ENCODE measurements at regions of chr1 and their contacts with region 1.

Region 1: GRCh38 chr1:161117759-161118581 is at the starts of genes NIT1 and PFDN2:
- DNase-seq: peak; percentile 84
- H3K4me3 Mint-ChIP-seq: peak within 1 kb of the TSS; percentile 93
- H3K27ac Mint-ChIP-seq: peak within 1 kb of the TSS; percentile 96
- H3K4me1 Mint-ChIP-seq: peaks cover 51% of the 10 kb centered on the region
- H3K27me3 Mint-ChIP-seq: no peaks in the 10 kb centered on the region
- total RNA-seq, gene NIT1: 47.5 and 48.5 TPM in 2 replicates
- total RNA-seq, gene PFDN2: 138 and 139 TPM in 2 replicates

Region 2: DNA sequence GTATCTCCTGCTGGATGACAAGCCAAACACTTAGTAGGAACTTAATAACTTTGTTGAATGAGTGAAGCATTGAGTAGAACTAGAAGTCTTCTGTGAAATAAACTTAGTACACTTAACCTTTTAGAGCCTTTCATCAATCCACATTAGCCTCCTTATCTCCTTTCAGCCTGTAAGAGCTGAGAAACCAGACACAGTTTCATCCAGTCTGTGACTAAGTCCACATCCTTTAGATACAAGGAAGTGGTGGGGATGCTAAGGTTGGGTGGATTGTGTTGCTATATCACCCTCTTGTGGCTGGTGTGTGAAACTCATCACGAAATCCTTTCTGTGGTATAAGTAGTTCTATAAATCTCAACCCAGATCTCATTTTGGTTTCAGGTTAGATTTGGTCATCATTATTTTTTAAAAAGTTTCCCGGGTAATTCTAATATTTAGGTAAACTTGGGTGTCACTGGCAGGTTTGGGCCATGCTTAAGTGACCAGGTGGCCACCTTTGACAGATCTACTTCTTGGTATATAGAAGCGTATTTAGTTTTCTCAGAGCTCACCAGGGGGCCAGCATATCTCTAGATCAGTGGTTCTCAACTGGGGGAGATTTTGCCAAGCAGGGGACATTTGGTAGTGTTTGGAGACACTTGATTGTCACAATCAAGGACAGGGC is 510.8 kb before region 1 on chr1:
- intact Hi-C with region 1: no loop called
- DNase-seq: peak; percentile 62
- H3K4me3 Mint-ChIP-seq: peak overlapping the region; percentile 55
- H3K27ac Mint-ChIP-seq: peak overlapping the region; percentile 60
- H3K4me1 Mint-ChIP-seq: peaks cover 51% of the 10 kb centered on the region
- H3K27me3 Mint-ChIP-seq: no peaks in the 10 kb centered on the region

Region 3: DNA sequence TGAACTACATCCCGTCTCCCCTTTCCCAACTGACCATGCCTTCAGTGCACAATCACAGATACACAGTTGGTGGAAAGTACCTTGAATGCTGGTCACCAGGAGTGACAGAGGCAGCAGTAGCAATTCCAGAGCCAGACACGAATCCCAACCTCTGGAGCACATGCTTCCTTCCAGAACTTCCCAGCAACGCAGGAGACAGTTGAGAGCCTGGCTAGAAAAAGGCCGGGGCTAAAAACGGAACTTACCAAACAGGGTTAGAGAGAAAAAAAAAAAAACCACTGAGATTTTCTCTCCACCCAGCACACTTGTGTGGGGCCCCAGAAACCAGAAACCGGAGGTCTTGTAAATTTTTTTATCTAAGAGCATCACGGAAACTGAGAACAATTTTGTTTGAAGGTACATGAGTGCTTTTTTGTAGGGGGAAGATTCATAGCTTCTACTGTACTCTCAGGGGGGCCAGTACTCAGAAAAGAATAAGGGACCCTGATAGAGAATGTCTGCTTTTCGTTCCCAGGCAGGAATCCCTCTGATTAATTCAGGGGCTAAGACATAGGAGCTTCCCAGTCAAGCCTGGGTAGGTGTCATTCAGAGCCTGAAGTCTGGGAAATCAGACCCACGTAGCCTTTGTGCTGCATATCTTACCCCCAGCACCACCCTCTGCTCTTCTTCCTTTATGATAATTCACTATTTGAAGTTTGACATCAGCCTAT is 406.2 kb before region 1 on chr1 and contains the start of gene CD48:
- intact Hi-C with region 1: loop called (anchors 10 kb)
- DNase-seq: peak; percentile 56
- H3K4me3 Mint-ChIP-seq: no peak within 1 kb of the TSS
- H3K27ac Mint-ChIP-seq: no peak within 1 kb of the TSS
- H3K4me1 Mint-ChIP-seq: peaks cover 29% of the 10 kb centered on the region
- H3K27me3 Mint-ChIP-seq: no peaks in the 10 kb centered on the region
- total RNA-seq, gene CD48: 101 and 103 TPM in 2 replicates

Region 4: GRCh38 chr1:161045750-161046571 is 72.0 kb before region 1 on chr1 and contains the start of gene USF1:
- intact Hi-C with region 1: loop called (anchors 5 kb)
- DNase-seq: peak; percentile 92
- H3K4me3 Mint-ChIP-seq: peak within 1 kb of the TSS; percentile 95
- H3K27ac Mint-ChIP-seq: peak within 1 kb of the TSS; percentile 100
- H3K4me1 Mint-ChIP-seq: peaks cover 33% of the 10 kb centered on the region
- H3K27me3 Mint-ChIP-seq: no peaks in the 10 kb centered on the region
- total RNA-seq, gene USF1: 49.1 and 53.2 TPM in 2 replicates

Region 5: GRCh38 chr1:161080391-161081355 is 37.3 kb before region 1 on chr1:
- intact Hi-C with region 1: no loop called
- DNase-seq: no peak
- H3K4me3 Mint-ChIP-seq: no peak overlapping the region
- H3K27ac Mint-ChIP-seq: no peak overlapping the region
- H3K4me1 Mint-ChIP-seq: no peaks in the 10 kb centered on the region
- H3K27me3 Mint-ChIP-seq: peaks cover 2% of the 10 kb centered on the region

Region 6: GRCh38 chr1:161098210-161099068 is 19.5 kb before region 1 on chr1 and contains the start of gene KLHDC9:
- intact Hi-C with region 1: loop called (anchors 2 kb)
- DNase-seq: peak; percentile 63
- H3K4me3 Mint-ChIP-seq: peak within 1 kb of the TSS; percentile 78
- H3K27ac Mint-ChIP-seq: peak within 1 kb of the TSS; percentile 84
- H3K4me1 Mint-ChIP-seq: peaks cover 36% of the 10 kb centered on the region
- H3K27me3 Mint-ChIP-seq: no peaks in the 10 kb centered on the region
- total RNA-seq, gene KLHDC9: not detected in 2 replicates

Region 7: GRCh38 chr1:161153679-161154426 is 35.9 kb after region 1 on chr1 and contains the start of gene UFC1:
- intact Hi-C with region 1: loop called (anchors 2 kb)
- DNase-seq: peak; percentile 82
- H3K4me3 Mint-ChIP-seq: peak within 1 kb of the TSS; percentile 100
- H3K27ac Mint-ChIP-seq: peak within 1 kb of the TSS; percentile 100
- H3K4me1 Mint-ChIP-seq: peaks cover 22% of the 10 kb centered on the region
- H3K27me3 Mint-ChIP-seq: no peaks in the 10 kb centered on the region
- total RNA-seq, gene UFC1: 91.5 and 91.8 TPM in 2 replicates

Region 8: DNA sequence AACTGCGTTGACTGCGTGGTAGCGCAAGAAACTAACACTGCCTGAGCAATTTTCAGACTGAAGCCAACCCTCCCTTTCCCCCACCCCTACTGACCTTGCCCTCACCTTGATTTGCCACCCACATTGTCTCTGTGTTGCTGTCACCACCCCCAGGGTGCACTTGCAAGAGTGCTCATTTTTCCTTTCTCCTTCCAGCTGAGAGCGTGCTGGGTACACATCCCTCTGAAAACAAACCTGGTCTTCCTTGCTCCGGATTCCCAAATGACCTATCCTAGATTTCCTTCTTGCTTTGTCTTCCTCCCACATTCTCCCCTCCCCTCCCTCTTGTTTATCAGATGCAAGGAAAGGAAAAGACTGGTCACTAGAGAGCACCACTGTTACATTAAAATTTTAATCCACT is 167.6 kb after region 1 on chr1:
- intact Hi-C with region 1: no loop called
- DNase-seq: no peak
- H3K4me3 Mint-ChIP-seq: no peak overlapping the region
- H3K27ac Mint-ChIP-seq: no peak overlapping the region
- H3K4me1 Mint-ChIP-seq: no peaks in the 10 kb centered on the region
- H3K27me3 Mint-ChIP-seq: peaks cover 17% of the 10 kb centered on the region

Measured in activated T-helper 2 cell treated with anti-CD3 and anti-CD28 coated beads, Interferon-gamma antibody, Interleukin-2, Interleukin-4, amounts not matched to agents 10 μg/mL and 5 μg/mL and 100 μg/mL, durations not matched to agents 14 hours and 24 hours and 36 hours (primary cell).